ENCODE measurements at regions of chr5 and their contacts with region 1.

Region 1: GRCh38 chr5:71586941-71587765 is at the start of gene MCCC2:
- DNase-seq: peak; percentile 98
- H3K4me3 Mint-ChIP-seq: peak within 1 kb of the TSS; percentile 84
- H3K27ac Mint-ChIP-seq: peak within 1 kb of the TSS; percentile 90
- H3K4me1 Mint-ChIP-seq: peaks cover 34% of the 10 kb centered on the region
- H3K27me3 Mint-ChIP-seq: no peaks in the 10 kb centered on the region
- total RNA-seq, gene MCCC2: 52.8 to 54.4 TPM

Region 2: DNA sequence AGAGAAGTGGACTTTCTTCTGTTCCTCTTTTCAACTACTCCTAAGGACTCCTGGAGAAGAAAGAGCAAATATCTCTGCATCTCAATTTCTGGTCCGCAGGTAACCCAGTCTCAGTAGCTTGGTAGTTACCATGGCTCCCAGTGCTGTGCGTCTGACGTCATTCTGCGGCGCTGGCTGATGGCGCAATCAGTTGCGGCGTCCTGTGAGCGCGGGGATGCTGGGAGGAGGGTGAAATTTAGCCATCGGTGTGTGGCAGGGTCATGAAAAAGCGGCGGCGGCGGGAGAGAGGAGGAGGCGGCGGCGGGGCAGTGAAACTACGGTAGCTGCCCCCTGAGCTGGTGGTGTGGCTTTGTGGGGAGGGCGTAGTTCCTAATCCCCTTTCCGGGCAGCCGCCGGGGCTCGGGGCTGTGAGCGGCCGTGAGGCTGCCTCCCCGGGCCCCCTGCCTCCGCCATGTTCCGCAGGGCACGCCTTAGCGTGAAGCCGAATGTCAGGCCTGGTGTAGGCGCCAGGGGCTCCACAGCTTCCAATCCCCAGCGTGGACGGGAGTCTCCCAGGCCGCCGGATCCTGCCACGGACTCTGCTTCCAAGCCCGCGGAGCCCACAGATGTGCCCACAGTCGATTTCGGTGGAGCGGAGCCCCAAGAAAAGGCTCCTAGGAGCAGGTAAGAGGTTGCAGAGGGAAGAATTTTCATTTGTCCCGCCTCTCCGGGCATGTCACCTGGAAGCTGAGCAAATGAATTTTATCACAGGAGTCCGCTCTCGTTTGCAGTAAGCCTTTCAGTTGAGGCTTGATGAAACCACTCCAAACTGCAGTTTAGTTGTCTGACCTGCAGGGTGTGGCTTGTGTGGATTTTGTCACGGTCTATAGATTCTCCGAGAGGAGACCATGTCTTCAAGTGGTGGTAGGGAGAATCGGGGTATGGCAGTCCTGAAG is 131.5 kb before region 1 on chr5 and contains the start of gene BDP1:
- CTCF ChIA-PET with region 1: no interaction called
- POLR2A ChIA-PET with region 1: interaction called, 3 read pairs
- intact Hi-C with region 1: loop called (anchors 5 kb)
- DNase-seq: peak; percentile 99
- H3K4me3 Mint-ChIP-seq: peak within 1 kb of the TSS; percentile 96
- H3K27ac Mint-ChIP-seq: peak within 1 kb of the TSS; percentile 92
- H3K4me1 Mint-ChIP-seq: peaks cover 24% of the 10 kb centered on the region
- H3K27me3 Mint-ChIP-seq: peaks cover 7% of the 10 kb centered on the region
- total RNA-seq, gene BDP1: 23.7 to 26.6 TPM

Region 3: GRCh38 chr5:71508751-71509150 is 78.4 kb before region 1 on chr5:
- CTCF ChIA-PET with region 1: no interaction called
- POLR2A ChIA-PET with region 1: no interaction called
- intact Hi-C with region 1: no loop called
- DNase-seq: no peak
- H3K4me3 Mint-ChIP-seq: no peak overlapping the region
- H3K27ac Mint-ChIP-seq: no peak overlapping the region
- H3K4me1 Mint-ChIP-seq: peaks cover 2% of the 10 kb centered on the region
- H3K27me3 Mint-ChIP-seq: no peaks in the 10 kb centered on the region

Region 4: DNA sequence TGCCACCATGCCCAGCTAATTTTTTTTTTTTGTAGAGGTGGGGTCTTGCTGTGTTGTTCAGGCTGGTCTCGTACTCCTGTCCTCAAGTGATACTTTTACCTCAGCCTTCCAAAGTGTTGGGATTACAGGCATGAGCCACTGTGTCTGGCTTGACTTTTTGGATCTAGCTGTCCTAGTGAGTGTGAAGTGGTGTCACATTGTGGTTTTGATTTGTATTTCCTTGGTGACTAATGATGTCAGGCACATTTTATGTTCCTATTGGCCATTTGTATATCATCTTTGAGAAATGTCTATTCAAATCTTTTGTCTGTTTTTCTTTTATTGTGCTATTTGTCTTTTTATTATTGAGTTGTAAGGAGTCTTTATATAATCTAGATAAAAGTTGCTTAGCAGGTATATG is 53.5 kb before region 1 on chr5:
- CTCF ChIA-PET with region 1: no interaction called
- POLR2A ChIA-PET with region 1: no interaction called
- intact Hi-C with region 1: loop called (anchors 1 kb)
- DNase-seq: no peak
- H3K4me3 Mint-ChIP-seq: no peak overlapping the region
- H3K27ac Mint-ChIP-seq: peak overlapping the region; percentile 34
- H3K4me1 Mint-ChIP-seq: peaks cover 10% of the 10 kb centered on the region
- H3K27me3 Mint-ChIP-seq: no peaks in the 10 kb centered on the region

Region 5: GRCh38 chr5:71693828-71694427 is 106.8 kb after region 1 on chr5:
- CTCF ChIA-PET with region 1: no interaction called
- POLR2A ChIA-PET with region 1: no interaction called
- intact Hi-C with region 1: no loop called
- DNase-seq: no peak
- H3K4me3 Mint-ChIP-seq: no peak overlapping the region
- H3K27ac Mint-ChIP-seq: no peak overlapping the region
- H3K4me1 Mint-ChIP-seq: peaks cover 7% of the 10 kb centered on the region
- H3K27me3 Mint-ChIP-seq: peaks cover 5% of the 10 kb centered on the region

Region 6: DNA sequence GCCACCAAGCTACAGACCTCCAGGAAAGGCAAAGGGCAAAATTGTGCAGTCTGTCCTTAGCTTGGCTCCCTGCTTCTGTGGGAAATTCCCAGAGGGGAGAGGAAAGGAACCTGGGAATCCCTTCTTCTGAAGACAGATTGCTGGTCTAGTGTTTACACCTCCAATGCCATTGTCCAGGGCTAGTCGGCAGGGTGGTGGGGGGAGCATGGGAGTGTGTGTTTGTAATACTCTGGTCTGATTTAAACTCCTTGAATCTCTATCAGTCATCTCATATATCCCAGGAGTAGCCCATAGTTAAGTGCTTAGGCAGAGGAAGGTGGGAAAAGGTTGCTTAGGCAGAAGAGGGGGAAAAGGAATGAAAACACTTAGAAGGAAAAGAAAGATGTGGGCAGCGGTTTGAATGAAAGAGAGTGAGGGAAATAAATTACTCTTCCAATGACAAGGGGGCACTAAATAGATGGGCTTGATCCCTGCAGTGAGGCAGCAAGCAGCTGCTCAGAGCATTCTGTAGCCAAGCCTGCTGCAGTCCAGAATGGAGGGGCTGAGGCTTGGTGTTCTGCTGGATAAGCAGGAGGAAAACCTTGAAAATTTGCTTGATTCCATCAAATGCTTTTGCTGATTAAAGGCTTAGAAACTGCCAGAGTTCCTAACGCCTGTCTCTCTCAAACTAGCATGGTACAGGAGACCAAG is 433.3 kb after region 1 on chr5:
- CTCF ChIA-PET with region 1: no interaction called
- POLR2A ChIA-PET with region 1: no interaction called
- intact Hi-C with region 1: no loop called
- DNase-seq: no peak
- H3K4me3 Mint-ChIP-seq: no peak overlapping the region
- H3K27ac Mint-ChIP-seq: no peak overlapping the region
- H3K4me1 Mint-ChIP-seq: peaks cover under 1% of the 10 kb centered on the region
- H3K27me3 Mint-ChIP-seq: peaks cover 18% of the 10 kb centered on the region

Measured in activated CD4-positive, alpha-beta memory T cell treated with anti-CD3 and anti-CD28 coated beads for 36 hours (primary cell).